AG04450 (cell line): ENCODE measurements at regions of chr21 and their contacts with region 1.

Region 1: DNA sequence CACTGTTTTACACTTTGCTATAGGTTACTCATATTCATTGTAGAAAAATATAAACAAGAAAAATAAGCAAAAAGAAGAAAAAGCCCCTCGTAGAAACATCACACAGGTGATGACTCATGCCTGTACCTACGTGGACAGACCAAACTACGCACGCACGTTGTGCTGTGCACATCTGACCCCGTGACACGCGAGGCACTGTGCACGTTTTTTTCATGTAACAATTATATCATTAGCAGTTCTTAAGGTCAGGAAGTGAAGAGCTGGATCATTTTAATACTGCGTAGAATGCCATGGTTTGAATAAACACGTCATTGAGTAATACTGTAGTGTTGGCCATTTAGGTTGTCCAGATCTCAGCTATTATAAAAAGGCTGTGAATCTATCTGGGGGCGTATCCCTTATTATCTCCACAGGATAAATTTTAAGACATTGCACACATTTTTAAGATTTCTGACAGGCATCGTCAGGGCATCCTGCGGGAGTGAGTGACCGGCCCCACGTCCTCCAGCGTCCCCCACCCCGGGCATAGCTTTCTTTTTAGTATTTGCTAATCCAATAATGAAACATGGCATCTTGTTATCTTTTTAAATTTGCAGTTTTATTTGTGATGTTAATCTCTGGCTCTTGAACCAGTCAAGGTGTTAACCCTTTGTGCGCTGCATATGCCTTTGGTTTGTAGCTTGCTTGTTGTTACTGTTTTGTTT is 23.4 kb upstream of the ADARB1 start:
- DNase-seq: peak; percentile 92
- H3K4me3 ChIP-seq: peak overlapping the region; percentile 8; the same call in 1 of the 2 replicates
- H3K27ac ChIP-seq: peak overlapping the region; percentile 98
- H3K27me3 ChIP-seq: no peaks in the 10 kb centered on the region
- CTCF ChIP-seq: no peak

Region 2: GRCh38 chr21:44958471-44959191 is 92.3 kb before region 1 on chr21:
- CTCF ChIA-PET with region 1: no interaction called
- POLR2A ChIA-PET with region 1: interaction called, 13 read pairs
- DNase-seq: no peak
- H3K4me3 ChIP-seq: no peak overlapping the region
- H3K27ac ChIP-seq: no peak overlapping the region
- H3K27me3 ChIP-seq: no peaks in the 10 kb centered on the region
- CTCF ChIP-seq: no peak

Region 3: DNA sequence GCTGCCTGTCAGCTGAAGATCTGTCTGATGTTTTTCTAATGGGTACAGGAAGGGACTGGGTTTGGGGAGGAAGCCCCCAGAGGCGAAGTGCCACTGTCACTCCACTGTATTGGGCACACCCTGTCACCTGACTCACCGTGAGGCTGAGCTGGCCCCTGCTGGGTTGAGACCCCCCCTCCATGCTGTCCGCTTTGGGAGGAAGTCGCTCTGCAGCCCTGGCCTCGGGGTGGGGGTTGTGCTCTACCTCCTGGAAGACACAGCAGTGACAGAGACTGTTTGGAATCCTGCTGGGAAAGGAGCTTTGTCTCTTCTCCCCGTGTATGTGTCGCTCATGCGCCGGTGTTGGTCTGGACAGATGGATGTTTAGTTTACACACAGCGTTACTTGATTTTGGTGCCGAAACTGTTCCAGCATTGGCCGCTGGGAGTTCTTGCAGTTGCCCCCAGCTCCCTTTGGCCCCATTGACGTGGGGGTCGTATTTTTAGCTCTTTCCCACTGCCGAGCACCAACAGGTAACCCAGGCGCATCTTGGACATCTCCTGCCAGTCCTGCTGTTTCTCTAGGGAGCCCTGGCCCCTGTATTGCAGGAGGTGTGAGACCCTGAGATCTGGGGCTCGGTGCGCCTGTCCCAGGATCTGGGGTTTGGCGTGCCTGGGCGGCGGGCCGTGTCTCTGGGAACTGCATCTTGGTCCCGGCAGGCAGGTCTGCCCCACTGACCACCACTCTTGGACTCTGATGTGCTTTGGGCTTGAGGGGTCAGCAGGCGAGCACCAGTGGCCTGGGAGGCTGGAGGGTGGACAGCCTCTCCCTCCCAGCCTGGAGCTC is 80.8 kb before region 1 on chr21:
- CTCF ChIA-PET with region 1: no interaction called
- POLR2A ChIA-PET with region 1: interaction called, 11 read pairs
- DNase-seq: no peak
- H3K4me3 ChIP-seq: no peak overlapping the region
- H3K27ac ChIP-seq: peak overlapping the region; percentile 31
- H3K27me3 ChIP-seq: no peaks in the 10 kb centered on the region
- CTCF ChIP-seq: no peak

Region 4: DNA sequence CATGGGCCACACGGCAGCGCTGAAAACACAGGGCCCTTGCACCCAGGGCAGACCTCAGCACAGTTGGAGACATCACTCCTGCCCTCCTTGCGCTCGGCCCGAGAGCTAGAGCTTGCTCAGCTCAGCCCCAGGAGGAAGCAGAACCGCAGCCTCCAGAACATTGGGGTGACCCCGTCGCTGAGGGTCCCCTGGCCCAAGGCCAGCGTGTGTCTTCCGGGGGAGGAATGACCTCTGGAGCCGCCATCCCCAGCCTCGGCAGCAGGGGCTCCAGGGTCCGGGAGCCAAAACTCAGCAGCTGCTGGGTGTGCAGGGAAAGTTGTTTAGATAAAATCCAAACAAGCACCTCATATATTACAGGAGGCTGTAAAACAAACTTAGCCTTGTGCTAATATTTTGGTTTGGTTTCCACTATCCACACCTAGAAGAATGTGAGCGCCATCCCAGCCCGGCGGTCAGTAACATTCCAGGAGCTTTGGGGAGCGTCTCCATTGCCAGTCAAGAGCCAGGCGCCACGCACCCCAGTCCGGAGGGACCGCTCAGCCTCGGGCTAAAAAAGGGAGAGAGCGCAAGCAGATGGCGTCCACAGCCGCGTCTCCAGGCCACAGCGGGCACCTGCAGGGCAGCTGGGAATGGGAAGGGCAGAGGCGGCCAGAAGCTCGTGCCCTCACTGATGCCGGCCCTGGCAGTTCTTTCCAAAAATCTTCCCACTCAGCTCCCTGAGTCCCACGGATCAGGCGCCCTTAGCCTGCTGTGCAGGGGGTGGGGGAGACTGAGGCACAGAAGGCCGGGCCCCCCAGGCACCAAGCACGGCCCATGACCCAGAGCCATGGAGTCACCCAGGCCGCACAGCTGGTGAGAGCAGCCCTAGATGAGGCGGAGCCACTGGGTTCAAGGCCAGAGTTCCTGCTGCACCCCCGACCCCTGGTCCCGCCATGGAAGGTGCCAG is 59.1 kb before region 1 on chr21:
- CTCF ChIA-PET with region 1: no interaction called
- POLR2A ChIA-PET with region 1: interaction called, 12 read pairs
- DNase-seq: peak; percentile 79
- H3K4me3 ChIP-seq: 0 out of 2 replicates have a peak overlapping the region, but pooled peaks have one; percentile 17
- H3K27ac ChIP-seq: peak overlapping the region; percentile 21
- H3K27me3 ChIP-seq: peaks cover 48% of the 10 kb centered on the region
- CTCF ChIP-seq: peak; percentile 56

Region 5: DNA sequence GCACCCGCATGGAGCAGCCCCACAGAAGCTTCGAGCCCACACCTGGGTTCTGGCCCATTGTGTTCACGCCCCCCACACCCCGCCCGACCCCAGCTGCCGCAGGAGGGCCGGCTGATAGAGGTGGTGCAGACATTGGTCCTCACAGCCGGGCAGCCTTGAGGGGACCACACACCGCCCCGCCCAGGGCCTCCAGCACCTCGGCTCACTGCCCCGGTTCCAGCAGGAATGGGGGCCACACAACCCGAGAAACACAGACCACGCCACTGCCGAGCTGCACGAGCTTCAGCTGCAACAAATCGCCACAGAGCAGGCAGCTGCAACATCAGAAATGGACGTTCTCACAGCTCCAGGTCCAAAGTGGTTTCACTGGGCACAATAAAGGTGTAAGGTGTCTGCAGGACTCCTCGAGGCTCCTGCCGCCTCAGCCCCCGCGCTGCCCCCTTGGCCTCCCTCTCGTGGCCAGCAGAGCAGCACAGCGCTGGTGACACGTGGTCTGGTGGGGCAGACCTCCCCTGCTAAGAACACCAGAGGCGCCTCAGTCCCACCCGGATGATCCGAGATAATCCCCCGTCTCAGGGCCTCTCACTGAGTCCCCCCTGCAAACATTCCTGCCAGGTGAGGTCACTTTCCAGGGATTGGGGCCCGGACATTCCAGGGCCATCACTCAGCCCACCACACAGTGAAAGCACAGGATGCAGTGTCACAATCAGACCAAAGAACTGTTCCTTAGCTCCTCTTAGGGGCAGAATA is 38.9 kb before region 1 on chr21:
- CTCF ChIA-PET with region 1: interaction called, 4 read pairs
- POLR2A ChIA-PET with region 1: interaction called, 16 read pairs
- DNase-seq: peak; percentile 79
- H3K4me3 ChIP-seq: no peak overlapping the region
- H3K27ac ChIP-seq: peak overlapping the region; percentile 70
- H3K27me3 ChIP-seq: no peaks in the 10 kb centered on the region
- CTCF ChIP-seq: peak; percentile 20